Activated naive CD4-positive, alpha-beta T cell treated with anti-CD3 and anti-CD28 coated beads for 36 hours (primary cell): ENCODE measurements at regions of chr16 and their contacts with region 1.

Region 1: GRCh38 chr16:67935402-67936123 is 1.1 kb downstream of the PSMB10 start:
- DNase-seq: peak; percentile 98
- H3K4me3 Mint-ChIP-seq: peak overlapping the region; percentile 100
- H3K27ac Mint-ChIP-seq: peak overlapping the region; percentile 94
- H3K4me1 Mint-ChIP-seq: peaks cover 41% of the 10 kb centered on the region
- H3K27me3 Mint-ChIP-seq: no peaks in the 10 kb centered on the region

Region 2: DNA sequence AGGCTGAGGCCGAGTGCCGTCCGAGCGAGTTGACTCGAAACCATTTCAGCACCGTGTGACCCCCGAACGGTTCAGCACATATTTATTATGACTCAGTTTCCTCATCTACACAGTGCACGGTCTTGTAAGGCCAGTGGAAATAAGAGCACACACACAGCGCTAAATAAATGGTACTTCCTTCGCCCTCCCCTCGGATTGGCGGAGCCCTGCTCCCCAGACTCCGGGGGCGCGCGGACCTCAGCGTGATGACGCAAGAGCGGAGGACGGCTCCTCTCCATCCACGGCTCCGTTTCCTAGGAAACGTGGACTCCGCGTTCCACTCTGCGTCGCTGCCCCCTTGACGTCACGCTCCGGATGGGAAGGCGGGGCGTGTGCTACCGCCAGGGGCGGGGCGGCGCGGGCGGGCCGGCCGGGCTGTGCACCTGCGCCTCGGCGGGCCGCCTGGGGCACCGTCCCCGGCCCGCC is 275.0 kb before region 1 on chr16 and contains the start of gene PARD6A:
- CTCF ChIA-PET with region 1: interaction called, 3 read pairs
- intact Hi-C with region 1: loop called (anchors 1 kb)
- DNase-seq: peak; percentile 97
- H3K4me3 Mint-ChIP-seq: peak within 1 kb of the TSS; percentile 90
- H3K27ac Mint-ChIP-seq: peak within 1 kb of the TSS; percentile 92
- H3K4me1 Mint-ChIP-seq: peaks cover 21% of the 10 kb centered on the region
- H3K27me3 Mint-ChIP-seq: no peaks in the 10 kb centered on the region
- total RNA-seq, gene PARD6A: 7.3 to 8.4 TPM

Region 3: DNA sequence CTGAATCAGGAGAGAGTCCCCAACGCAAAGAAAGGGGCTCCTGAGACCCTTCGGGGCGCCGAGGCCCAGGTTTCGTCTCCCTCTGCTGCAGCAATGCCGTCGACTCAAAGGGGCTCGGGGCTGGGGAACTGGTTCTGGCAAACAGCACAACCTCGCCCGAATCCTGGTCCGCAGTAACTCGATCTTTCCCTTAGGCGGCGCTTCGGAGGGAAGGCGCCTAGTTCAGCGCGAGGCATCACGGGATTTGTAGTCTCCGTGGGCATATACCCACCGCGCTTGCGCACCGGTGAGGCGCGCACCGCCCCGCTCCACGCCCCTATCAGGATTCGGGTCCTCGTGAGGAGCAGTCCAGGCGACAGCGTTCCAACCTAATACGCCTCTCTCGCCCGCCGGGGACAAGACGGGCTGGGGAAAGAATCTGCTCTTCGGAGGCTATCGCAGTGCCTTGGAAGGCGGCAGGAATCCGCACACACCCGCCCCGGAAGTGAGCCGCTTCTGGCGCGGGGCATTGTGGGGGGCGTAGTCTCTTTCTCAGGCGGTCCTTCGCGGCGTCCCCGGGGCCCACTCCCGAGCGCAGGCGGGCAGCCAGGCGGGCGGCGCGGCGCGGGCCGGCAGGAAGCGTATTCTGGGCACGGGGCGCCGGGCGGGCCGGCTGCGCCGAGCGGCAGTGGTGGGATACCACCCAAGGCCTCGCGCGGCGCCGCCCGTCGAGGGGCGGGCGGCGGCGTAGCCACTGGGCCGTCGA is 93.6 kb before region 1 on chr16 and contains the start of gene THAP11:
- CTCF ChIA-PET with region 1: interaction called, 3 read pairs
- intact Hi-C with region 1: loop called (anchors 1 kb)
- DNase-seq: peak; percentile 97
- H3K4me3 Mint-ChIP-seq: peak within 1 kb of the TSS; percentile 91
- H3K27ac Mint-ChIP-seq: peak within 1 kb of the TSS; percentile 98
- H3K4me1 Mint-ChIP-seq: peaks cover 33% of the 10 kb centered on the region
- H3K27me3 Mint-ChIP-seq: no peaks in the 10 kb centered on the region
- total RNA-seq, gene THAP11: 19.9 to 20.6 TPM

Region 4: GRCh38 chr16:67917852-67918236 is 17.7 kb before region 1 on chr16:
- CTCF ChIA-PET with region 1: no interaction called
- intact Hi-C with region 1: loop called (anchors 1 kb)
- DNase-seq: peak; percentile 81
- H3K4me3 Mint-ChIP-seq: no peak overlapping the region
- H3K27ac Mint-ChIP-seq: peak overlapping the region; percentile 89
- H3K4me1 Mint-ChIP-seq: peaks cover 38% of the 10 kb centered on the region
- H3K27me3 Mint-ChIP-seq: no peaks in the 10 kb centered on the region

Region 5: GRCh38 chr16:67993189-67994039 is 57.9 kb after region 1 on chr16:
- CTCF ChIA-PET with region 1: no interaction called
- intact Hi-C with region 1: loop called (anchors 2 kb)
- DNase-seq: peak; percentile 83
- H3K4me3 Mint-ChIP-seq: peak overlapping the region; percentile 80
- H3K27ac Mint-ChIP-seq: peak overlapping the region; percentile 92
- H3K4me1 Mint-ChIP-seq: peaks cover 37% of the 10 kb centered on the region
- H3K27me3 Mint-ChIP-seq: no peaks in the 10 kb centered on the region

Region 6: DNA sequence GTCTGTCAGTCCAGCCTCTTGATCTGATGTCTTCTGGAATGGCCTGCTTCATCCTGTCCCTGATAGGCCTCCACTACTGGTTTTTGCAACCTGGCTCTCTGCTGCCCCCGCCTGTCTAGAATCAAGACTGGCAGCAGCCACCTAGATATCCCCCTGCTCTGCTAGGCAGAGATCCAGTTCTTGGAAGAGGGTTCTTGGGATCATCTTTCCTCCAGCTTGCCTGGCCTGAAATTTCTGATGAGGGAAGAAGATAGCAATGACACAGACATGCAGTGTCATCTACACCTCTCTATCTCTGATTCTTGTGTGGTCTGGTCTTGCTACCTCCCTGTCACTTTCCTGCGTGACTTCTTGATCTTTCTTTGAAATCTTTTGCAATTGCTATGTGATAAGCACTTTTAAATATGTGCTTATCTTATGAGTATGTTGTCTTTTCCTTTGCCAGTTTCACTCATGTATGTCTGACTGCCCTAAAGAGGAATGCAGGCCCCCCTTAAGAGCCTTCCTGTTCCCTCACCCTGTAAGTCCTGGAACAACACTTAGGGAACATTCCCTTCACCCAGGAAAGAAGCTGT is 129.3 kb after region 1 on chr16:
- CTCF ChIA-PET with region 1: interaction called, 3 read pairs
- intact Hi-C with region 1: loop called (anchors 2 kb)
- DNase-seq: peak; percentile 88
- H3K4me3 Mint-ChIP-seq: no peak overlapping the region
- H3K27ac Mint-ChIP-seq: no peak overlapping the region
- H3K4me1 Mint-ChIP-seq: peaks cover 61% of the 10 kb centered on the region
- H3K27me3 Mint-ChIP-seq: no peaks in the 10 kb centered on the region